ENCODE measurements at regions of chr10 and their contacts with region 1.

Region 1: GRCh38 chr10:68759967-68760366 is 38.9 kb downstream of the CCAR1 start:
- DNase-seq: no peak
- ATAC-seq: no peak
- H3K4me3 ChIP-seq: no peak overlapping the region
- H3K27ac ChIP-seq: no peak overlapping the region
- H3K4me1 ChIP-seq: no peaks in the 10 kb centered on the region
- H3K27me3 ChIP-seq: no peaks in the 10 kb centered on the region
- CTCF ChIP-seq: no peak

Region 2: GRCh38 chr10:68348265-68348741 is 411.7 kb before region 1 on chr10:
- intact Hi-C with region 1: loop called in 1 of 10 experiments (anchors 10 kb)
- DNase-seq: no peak
- ATAC-seq: peak in 2 of 8 donors; percentile 29 to 39
- H3K4me3 ChIP-seq: no peak overlapping the region
- H3K27ac ChIP-seq: no peak overlapping the region
- H3K4me1 ChIP-seq: no peaks in the 10 kb centered on the region
- H3K27me3 ChIP-seq: no peaks in the 10 kb centered on the region
- CTCF ChIP-seq: peak; percentile 27 to 78 (median 61)

Region 3: GRCh38 chr10:68727146-68727545 is 32.8 kb before region 1 on chr10:
- intact Hi-C with region 1: loop called in 1 of 10 experiments (anchors 2 kb)
- DNase-seq: no peak
- ATAC-seq: no peak
- H3K4me3 ChIP-seq: no peak overlapping the region
- H3K27ac ChIP-seq: no peak overlapping the region
- H3K4me1 ChIP-seq: peaks cover 5 to 13% (median 7%) of the 10 kb centered on the region in 9 donors
- H3K27me3 ChIP-seq: no peaks in the 10 kb centered on the region
- CTCF ChIP-seq: no peak

Region 4: DNA sequence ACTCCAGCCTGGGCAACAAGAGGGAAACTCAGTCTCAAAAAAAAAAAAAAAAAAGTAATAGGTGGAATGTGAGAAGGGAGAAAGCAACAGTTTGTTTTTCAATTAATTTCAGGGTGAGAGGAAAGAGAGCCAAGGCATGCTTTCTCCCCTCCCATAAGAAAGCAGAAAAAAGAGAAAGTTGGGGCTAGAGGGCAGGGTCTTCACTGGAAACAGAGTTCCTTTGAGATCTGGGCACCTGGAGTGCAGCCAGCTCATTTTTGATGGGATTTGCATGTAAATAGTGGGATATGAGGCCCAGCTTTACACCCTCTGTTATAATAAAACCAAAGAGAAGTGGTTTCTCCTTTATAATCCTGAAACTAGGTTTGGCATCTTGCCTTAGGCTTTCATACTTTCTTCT is 53.6 kb after region 1 on chr10:
- intact Hi-C with region 1: no loop called
- DNase-seq: no peak
- ATAC-seq: no peak
- H3K4me3 ChIP-seq: no peak overlapping the region
- H3K27ac ChIP-seq: no peak overlapping the region
- H3K4me1 ChIP-seq: no peaks in the 10 kb centered on the region
- H3K27me3 ChIP-seq: no peaks in the 10 kb centered on the region
- CTCF ChIP-seq: no peak

Measured in heart right ventricle (tissue), 16 donors.